ENCODE measurements at regions of chr9 and their contacts with region 1.

Region 1: DNA sequence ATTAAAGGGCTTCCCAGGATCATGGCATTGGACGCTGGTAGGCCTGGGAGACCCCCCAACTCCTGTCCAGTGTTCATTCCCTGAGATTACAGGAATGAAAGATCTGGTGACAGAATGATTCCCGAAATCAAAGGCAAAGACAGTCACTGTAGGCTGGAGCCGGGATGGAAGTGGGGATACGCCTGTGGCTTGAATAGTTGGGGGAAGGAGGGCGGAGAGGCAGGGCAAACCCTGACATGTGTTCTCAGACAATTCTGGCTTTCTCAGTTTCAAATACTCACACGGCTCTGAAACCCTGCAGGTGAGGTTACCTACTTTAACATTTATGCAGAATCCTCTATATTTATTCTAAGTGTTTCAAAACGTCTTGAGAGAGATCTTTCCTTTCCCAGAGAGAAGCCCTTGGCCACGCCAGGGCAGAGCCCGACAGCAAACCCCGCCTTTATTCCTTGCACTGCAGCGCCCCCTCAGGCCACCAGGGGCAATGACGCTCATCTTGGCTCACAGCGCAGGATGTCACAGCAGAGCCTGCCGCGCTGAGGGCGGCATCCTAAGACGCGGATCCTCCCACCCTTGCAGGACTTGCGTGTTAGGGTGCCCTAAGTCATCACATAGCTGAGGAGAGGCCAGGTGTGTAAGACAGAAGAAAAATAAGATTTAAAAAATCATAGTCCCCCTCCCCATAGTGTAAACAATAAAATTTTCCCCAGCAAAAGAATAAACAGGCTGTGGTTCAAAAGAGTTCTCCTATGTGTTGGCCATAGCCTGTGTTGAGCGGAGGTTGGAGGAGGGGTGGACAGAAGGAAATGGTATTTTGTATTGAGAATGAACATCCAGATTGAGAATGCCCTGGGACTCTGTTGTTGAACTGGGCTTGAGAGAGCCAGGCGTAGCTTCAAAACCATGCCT is 284.5 kb downstream of the NTRK2 start:
- DNase-seq: peak; percentile 75 to 91 (median 86)
- H3K4me3 ChIP-seq: peak overlapping the region in 26 of 59 donors; percentile 1 to 50 (median 25)
- H3K27ac ChIP-seq: peak overlapping the region in 55 of 59 donors; percentile 6 to 88 (median 60)
- H3K27me3 ChIP-seq: no peaks in the 10 kb centered on the region
- CTCF ChIP-seq: peak; percentile 73 to 99 (median 96)

Region 2: GRCh38 chr9:84880835-84881234 is 73.2 kb before region 1 on chr9:
- intact Hi-C with region 1: no loop called
- DNase-seq: no peak
- H3K4me3 ChIP-seq: no peak overlapping the region
- H3K27ac ChIP-seq: peak overlapping the region in 1 of 59 donors; percentile 31
- H3K27me3 ChIP-seq: no peaks in the 10 kb centered on the region
- CTCF ChIP-seq: no peak

Region 3: GRCh38 chr9:85024374-85024773 is 70.3 kb after region 1 on chr9:
- intact Hi-C with region 1: loop called in 1 of 2 experiments (anchors 5 kb)
- DNase-seq: peak in 3 of 10 donors; percentile 33 to 67 (median 46)
- H3K4me3 ChIP-seq: no peak overlapping the region
- H3K27ac ChIP-seq: peak overlapping the region in 50 of 59 donors; percentile 0 to 73 (median 47)
- H3K27me3 ChIP-seq: no peaks in the 10 kb centered on the region
- CTCF ChIP-seq: peak in 52 of 56 donors; percentile 17 to 73 (median 48)

Region 4: GRCh38 chr9:85067792-85068191 is 113.7 kb after region 1 on chr9:
- intact Hi-C with region 1: no loop called
- DNase-seq: no peak
- H3K4me3 ChIP-seq: no peak overlapping the region
- H3K27ac ChIP-seq: no peak overlapping the region
- H3K27me3 ChIP-seq: no peaks in the 10 kb centered on the region
- CTCF ChIP-seq: no peak

Region 5: GRCh38 chr9:85425153-85425611 is 471.1 kb after region 1 on chr9:
- intact Hi-C with region 1: no loop called
- DNase-seq: peak in 9 of 10 donors; percentile 30 to 77 (median 66)
- H3K4me3 ChIP-seq: peak overlapping the region in 26 of 59 donors; percentile 1 to 45 (median 14)
- H3K27ac ChIP-seq: peak overlapping the region in 18 of 59 donors; percentile 1 to 50 (median 21)
- H3K27me3 ChIP-seq: no peaks in the 10 kb centered on the region
- CTCF ChIP-seq: peak; percentile 42 to 81 (median 73)

Measured in dorsolateral prefrontal cortex (tissue), 120 donors.